Dendritic cell treated with granulocyte-macrophage colony-stimulating factor and Interleukin-4, amounts not matched to agents 40 ng/mL and 50 ng/mL, for 4 days (primary cell): ENCODE measurements at regions of chr4 and their contacts with region 1.

Region 1: DNA sequence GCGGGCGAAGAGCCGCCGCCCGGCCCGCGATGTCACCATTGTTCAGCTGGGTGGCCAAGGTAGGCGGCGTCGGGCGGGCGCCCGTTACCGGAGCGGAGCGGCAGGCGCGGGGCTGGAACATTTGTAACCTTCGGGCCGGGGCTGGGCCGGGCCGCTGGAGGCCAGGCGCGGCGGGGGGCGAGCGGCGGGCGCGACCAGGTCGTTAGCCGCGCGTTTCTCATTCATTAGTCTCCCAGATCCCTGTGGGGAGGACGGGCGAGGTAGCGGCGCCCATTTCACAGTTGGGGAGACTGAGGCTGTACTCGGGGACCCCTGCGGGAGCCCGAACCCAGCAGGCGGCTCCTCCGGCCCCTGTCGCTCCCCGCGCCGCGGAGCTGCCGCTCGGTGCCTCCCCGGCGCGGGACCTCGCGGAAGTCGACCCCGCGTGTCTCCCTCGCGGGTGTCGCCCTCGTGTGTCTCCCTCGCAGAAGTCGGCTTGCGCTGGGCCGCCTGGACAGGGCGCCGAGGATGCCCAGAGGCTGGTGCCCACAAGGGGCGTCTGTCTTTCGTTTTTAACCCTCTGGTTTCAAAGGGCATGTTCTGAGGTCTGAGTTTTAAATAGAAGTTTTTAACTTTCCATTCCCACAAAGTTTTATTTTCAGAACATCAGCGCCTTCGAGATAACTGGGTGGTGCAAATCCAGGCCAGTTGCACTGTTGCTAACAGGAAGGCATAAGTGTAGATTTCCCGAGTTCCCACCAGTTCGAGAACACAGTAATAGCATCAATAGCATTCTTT is 17.5 kb downstream of the PTTG2 start:
- H3K4me3 Mint-ChIP-seq: peak overlapping the region; percentile 74
- H3K27ac Mint-ChIP-seq: peak overlapping the region; percentile 79
- H3K4me1 Mint-ChIP-seq: peaks cover 44% of the 10 kb centered on the region
- H3K27me3 Mint-ChIP-seq: no peaks in the 10 kb centered on the region

Region 2: GRCh38 chr4:37503261-37503660 is 474.4 kb before region 1 on chr4:
- intact Hi-C with region 1: no loop called
- H3K4me3 Mint-ChIP-seq: no peak overlapping the region
- H3K27ac Mint-ChIP-seq: no peak overlapping the region
- H3K4me1 Mint-ChIP-seq: no peaks in the 10 kb centered on the region
- H3K27me3 Mint-ChIP-seq: peaks cover 17% of the 10 kb centered on the region

Region 3: DNA sequence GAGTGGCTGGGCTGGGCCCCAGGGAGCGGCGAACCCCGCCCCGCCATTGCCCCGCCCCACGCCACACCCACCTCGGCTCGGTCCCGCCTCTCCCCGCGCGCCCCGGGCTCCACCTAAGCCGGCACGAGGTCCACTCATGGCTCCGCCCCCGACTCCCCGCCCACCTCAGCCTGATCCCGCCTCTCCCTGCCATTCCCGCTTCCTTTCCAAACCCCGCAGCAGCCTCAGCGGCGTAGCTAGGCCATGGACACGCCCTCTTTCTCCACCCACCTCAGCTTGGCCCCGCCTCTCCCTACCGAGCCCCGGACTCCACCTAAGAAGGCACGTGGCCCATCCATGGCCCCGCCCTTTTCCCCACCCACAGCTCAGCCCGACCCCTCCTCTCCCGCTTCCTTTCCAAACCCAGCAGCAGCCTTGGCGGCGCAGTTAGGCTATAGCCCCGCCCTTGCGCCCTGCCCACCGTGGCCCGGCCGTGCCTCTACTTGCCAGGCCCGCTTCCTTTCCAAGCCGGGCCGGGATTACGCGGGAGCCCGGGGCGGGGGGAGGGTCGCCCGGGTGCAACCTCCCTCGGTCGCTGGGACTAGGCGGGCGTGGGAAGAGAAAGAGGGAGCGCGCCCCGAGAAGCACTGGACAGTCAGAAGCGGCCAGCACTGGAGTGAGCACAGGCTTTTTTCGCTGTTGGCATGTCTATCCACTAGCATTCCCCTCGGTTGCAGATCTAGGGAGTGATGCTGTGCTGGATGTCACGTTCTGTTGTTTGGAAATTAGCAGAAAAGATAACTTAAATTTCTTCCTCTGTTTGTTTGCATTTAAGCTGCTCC is 291.1 kb before region 1 on chr4 and contains the start of gene RELL1:
- intact Hi-C with region 1: loop called (anchors 5 kb)
- H3K4me3 Mint-ChIP-seq: peak within 1 kb of the TSS; percentile 86
- H3K27ac Mint-ChIP-seq: peak within 1 kb of the TSS; percentile 90
- H3K4me1 Mint-ChIP-seq: peaks cover 40% of the 10 kb centered on the region
- H3K27me3 Mint-ChIP-seq: no peaks in the 10 kb centered on the region

Region 4: GRCh38 chr4:37802068-37802666 is 175.5 kb before region 1 on chr4:
- intact Hi-C with region 1: loop called (anchors 5 kb)
- H3K4me3 Mint-ChIP-seq: no peak overlapping the region
- H3K27ac Mint-ChIP-seq: no peak overlapping the region
- H3K4me1 Mint-ChIP-seq: peaks cover 32% of the 10 kb centered on the region
- H3K27me3 Mint-ChIP-seq: no peaks in the 10 kb centered on the region

Region 5: DNA sequence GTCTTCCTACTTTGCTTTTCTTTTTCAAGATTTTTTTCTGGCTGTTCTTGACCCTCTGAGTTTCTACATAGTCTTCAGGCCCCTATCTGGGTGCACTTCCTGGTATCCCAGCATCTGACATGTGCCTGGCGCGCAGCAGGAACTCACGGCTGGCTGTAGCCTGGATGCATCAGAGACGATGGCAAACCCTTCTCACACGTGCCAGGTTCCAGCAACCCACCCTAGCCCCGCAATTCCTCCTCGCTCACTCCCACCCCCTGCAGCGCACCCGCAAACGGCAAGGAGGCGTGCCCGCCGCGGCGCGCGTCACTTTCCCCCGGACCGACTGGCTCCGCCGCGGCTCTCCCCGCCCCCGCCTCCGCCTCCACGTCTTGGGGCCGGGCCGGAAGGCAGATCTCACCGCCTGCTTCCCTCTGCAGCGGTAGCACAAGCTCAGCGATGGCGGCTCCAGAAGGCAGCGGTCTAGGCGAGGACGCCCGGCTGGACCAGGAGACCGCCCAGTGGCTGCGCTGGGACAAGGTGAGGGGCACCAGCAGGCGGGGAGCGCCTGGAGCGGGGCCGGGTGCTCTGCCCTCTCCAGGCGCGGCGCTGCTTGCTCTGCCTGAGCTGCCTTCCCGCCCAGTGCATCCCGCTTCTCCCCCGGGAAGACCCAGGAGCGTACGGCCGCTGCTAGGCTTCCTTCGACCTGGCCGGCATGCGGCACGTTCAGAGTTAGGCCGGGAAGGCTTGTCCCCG is 151.2 kb before region 1 on chr4 and contains the start of gene PGM2:
- intact Hi-C with region 1: loop called (anchors 5 kb)
- H3K4me3 Mint-ChIP-seq: peak within 1 kb of the TSS; percentile 86
- H3K27ac Mint-ChIP-seq: peak within 1 kb of the TSS; percentile 94
- H3K4me1 Mint-ChIP-seq: peaks cover 39% of the 10 kb centered on the region
- H3K27me3 Mint-ChIP-seq: no peaks in the 10 kb centered on the region

Region 6: GRCh38 chr4:38034986-38035882 is 57.6 kb after region 1 on chr4:
- intact Hi-C with region 1: loop called (anchors 5 kb)
- H3K4me3 Mint-ChIP-seq: no peak overlapping the region
- H3K27ac Mint-ChIP-seq: no peak overlapping the region
- H3K4me1 Mint-ChIP-seq: peaks cover 2% of the 10 kb centered on the region
- H3K27me3 Mint-ChIP-seq: no peaks in the 10 kb centered on the region